Activated CD4-positive, alpha-beta T cell treated with anti-CD3 and anti-CD28 coated beads, Interleukin-2, amount 10 ng/mL, durations not matched to agents 24 days and 14 days (primary cell): ENCODE measurements at regions of chr19 and their contacts with region 1.

Region 1: DNA sequence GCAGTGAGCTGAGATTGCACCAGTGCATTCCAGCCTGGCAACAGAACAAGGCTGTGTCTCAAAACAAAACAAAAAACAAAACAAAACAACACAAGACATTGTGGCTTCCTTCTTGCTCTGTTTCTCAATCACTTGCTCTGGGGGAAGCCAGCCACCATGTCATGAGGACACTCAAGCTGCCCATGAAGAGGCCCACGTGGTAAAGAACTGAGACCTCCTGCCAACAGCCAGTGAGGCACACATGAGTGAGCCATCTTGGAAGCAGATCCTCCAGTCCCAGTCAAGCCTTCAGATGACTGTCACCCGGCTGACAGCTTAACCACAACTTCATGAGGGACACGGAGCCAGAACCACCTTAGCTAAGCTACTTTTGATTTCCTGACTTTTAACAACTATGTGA is 25.2 kb downstream of the CPT1C start:
- DNase-seq: no peak
- H3K4me3 Mint-ChIP-seq: no peak overlapping the region
- H3K27ac Mint-ChIP-seq: peak overlapping the region; percentile 29
- H3K4me1 Mint-ChIP-seq: peaks cover 12% of the 10 kb centered on the region
- H3K27me3 Mint-ChIP-seq: no peaks in the 10 kb centered on the region

Region 2: GRCh38 chr19:49701271-49701786 is 14.8 kb before region 1 on chr19:
- intact Hi-C with region 1: loop called (anchors 2 kb)
- DNase-seq: no peak
- H3K4me3 Mint-ChIP-seq: no peak overlapping the region
- H3K27ac Mint-ChIP-seq: no peak overlapping the region
- H3K4me1 Mint-ChIP-seq: no peaks in the 10 kb centered on the region
- H3K27me3 Mint-ChIP-seq: no peaks in the 10 kb centered on the region

Region 3: GRCh38 chr19:49817964-49818648 is 102.0 kb after region 1 on chr19 and contains the start of gene MED25:
- intact Hi-C with region 1: no loop called
- DNase-seq: peak; percentile 97
- H3K4me3 Mint-ChIP-seq: peak within 1 kb of the TSS; percentile 88
- H3K27ac Mint-ChIP-seq: peak within 1 kb of the TSS; percentile 92
- H3K4me1 Mint-ChIP-seq: peaks cover 18% of the 10 kb centered on the region
- H3K27me3 Mint-ChIP-seq: peaks cover 2% of the 10 kb centered on the region
- total RNA-seq, gene MED25: 49.1 and 51.5 TPM in 2 replicates